Thyroid gland (tissue), 4 donors: ENCODE measurements at regions of chr5 and their contacts with region 1.

Region 1: GRCh38 chr5:79020861-79021561 is 35.9 kb upstream of the ARSB start:
- DNase-seq: peak; percentile 60 to 66
- H3K4me3 ChIP-seq: no peak overlapping the region
- H3K27ac ChIP-seq: no peak overlapping the region
- H3K4me1 ChIP-seq: no peaks in the 10 kb centered on the region
- H3K27me3 ChIP-seq: no peaks in the 10 kb centered on the region
- CTCF ChIP-seq: peak; percentile 48 to 83 (median 61)
- POLR2A ChIP-seq: no peak

Region 2: DNA sequence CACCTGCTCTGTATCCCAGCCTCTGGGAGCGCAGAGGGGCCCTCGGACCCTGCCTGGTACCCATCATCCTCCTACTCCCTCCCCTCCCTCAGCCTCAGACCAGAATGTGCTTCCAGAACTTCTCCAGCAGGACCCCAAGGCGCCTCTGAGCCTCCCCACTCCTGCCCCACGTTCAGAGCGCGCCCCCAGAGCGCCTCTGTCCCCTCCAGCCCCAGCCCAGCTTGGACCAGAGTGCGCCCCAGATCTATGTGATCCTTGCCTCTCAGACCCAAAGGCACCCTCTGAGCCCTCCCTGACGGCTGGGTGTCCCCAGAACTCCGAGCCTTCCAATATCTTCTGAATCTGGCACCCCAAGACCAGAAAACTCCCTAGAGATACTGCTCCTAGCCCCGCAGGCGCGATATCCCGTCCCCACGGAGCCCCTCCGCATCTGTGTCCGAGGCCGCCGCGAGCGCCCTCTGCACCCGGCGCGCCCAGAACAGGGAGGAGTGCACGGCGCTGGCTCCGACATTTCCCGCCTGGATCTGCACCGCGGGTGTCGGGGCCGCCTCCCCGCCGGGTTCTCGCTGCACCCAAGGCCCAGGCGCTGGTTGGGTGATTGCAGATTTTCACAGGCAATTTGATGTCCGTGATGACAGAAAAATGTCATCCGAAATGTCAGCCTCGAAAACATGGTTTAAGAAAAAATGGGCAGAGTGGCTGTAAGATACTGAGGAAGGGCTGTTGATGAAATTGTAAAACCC is 91.1 kb after region 1 on chr5:
- intact Hi-C with region 1: no loop called
- DNase-seq: no peak
- H3K4me3 ChIP-seq: no peak overlapping the region
- H3K27ac ChIP-seq: no peak overlapping the region
- H3K4me1 ChIP-seq: peaks cover 0 to 3% of the 10 kb centered on the region in 2 donors
- H3K27me3 ChIP-seq: peaks cover 8% of the 10 kb centered on the region
- CTCF ChIP-seq: no peak
- POLR2A ChIP-seq: no peak

Region 3: DNA sequence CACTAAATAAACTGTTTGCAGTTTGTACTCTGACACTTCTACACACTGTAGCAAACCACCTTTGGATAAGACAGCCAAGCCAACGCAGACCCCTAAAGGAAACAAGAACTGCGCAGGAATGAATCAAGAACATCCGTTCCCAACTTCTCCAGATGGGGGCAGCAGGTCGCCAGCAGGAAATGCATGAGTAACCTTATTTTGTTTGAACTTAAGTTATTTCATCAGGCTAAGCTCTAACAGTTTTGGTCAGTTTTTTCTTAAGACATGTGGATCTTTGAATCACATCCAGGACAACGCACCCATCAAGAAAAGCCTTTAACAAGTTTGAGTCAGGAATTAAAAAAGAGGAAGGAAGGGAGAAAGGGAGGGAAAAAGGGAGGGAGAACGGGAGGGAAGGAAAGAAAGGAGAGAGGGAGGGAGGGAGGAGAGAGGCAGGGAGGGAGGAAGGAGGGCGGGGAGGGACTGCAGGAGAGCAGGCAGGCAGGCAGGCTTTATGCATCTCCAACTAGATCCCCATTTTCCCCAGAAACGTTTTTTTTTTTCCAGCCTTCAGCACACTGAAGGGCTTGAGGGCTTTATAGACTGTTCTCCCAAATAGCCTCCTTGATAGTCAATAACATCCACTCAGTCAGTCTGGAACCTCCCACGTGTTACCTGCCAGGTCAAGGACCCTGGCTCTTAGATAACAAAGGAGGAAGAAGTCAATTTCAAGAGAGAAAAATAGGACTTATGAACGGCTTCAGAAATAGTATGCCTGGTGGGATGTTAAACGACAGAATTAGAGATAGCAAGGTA is 112.8 kb after region 1 on chr5:
- intact Hi-C with region 1: loop called (anchors 5 kb)
- DNase-seq: peak; percentile 77 to 80
- H3K4me3 ChIP-seq: peak overlapping the region in 1 of 3 donors; percentile 13
- H3K27ac ChIP-seq: peak overlapping the region in 2 of 3 donors; percentile 51 to 72
- H3K4me1 ChIP-seq: peaks cover 4 to 5% of the 10 kb centered on the region in 2 donors
- H3K27me3 ChIP-seq: no peaks in the 10 kb centered on the region
- CTCF ChIP-seq: peak in 5 of 6 experiments; percentile 62 to 81 (median 78)
- POLR2A ChIP-seq: no peak

Region 4: GRCh38 chr5:80083101-80083890 is 1062.3 kb after region 1 on chr5:
- intact Hi-C with region 1: loop called (anchors 10 kb)
- DNase-seq: peak; percentile 14 to 32
- H3K4me3 ChIP-seq: no peak overlapping the region
- H3K27ac ChIP-seq: peak overlapping the region; percentile 2 to 51 (median 28)
- H3K4me1 ChIP-seq: peaks cover 3 to 10% of the 10 kb centered on the region in 2 donors
- H3K27me3 ChIP-seq: no peaks in the 10 kb centered on the region
- CTCF ChIP-seq: peak; percentile 40 to 87 (median 74)
- POLR2A ChIP-seq: no peak